ENCODE measurements at regions of chr1 and their contacts with region 1.

Region 1: GRCh38 chr1:235642011-235642942 is 7.3 kb downstream of the GNG4 start:
- DNase-seq: peak; percentile 75
- H3K4me3 Mint-ChIP-seq: peak overlapping the region; percentile 65
- H3K27ac Mint-ChIP-seq: peak overlapping the region; percentile 95
- H3K4me1 Mint-ChIP-seq: peaks cover 73% of the 10 kb centered on the region
- H3K27me3 Mint-ChIP-seq: peaks cover 11% of the 10 kb centered on the region

Region 2: GRCh38 chr1:235495551-235495950 is 146.7 kb before region 1 on chr1:
- intact Hi-C with region 1: loop called (anchors 2 kb)
- DNase-seq: no peak
- H3K4me3 Mint-ChIP-seq: no peak overlapping the region
- H3K27ac Mint-ChIP-seq: no peak overlapping the region
- H3K4me1 Mint-ChIP-seq: peaks cover 22% of the 10 kb centered on the region
- H3K27me3 Mint-ChIP-seq: no peaks in the 10 kb centered on the region

Region 3: DNA sequence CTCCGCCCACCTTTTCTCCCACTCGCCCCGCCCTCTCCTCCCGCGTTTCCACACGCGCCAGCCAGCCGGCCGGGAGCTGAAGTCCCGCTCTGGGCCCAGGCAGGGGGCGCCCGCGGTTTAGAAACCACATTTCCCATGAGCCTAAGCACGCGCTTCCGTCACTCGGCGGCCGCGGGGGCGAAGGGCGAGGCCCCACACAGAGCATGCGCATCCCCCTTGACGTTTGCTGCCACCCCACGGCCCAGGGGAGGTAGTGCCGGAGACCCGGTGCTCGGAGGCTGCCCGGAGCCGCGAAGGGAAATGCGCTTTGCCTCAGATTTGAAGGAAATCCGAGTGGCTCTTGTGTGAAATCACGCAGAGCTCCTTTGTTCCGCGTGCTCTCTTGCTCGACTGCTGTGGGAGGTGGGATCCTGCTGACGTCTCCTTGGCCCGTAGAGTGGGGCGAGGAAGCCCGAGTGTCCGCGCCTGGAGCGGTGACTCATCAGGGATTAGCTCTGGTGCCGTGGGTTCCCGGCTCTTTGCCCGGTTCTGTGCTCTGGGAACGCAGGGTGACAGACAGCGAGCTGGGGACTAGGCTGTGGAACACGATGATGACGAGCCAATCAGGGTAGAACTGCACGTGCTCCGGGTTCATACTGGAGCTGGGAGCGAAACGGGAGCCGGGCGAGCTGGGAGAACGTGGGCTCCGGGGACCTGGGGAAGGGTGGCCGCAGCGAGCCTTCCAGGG is 137.6 kb before region 1 on chr1:
- intact Hi-C with region 1: loop called (anchors 1 kb)
- DNase-seq: peak; percentile 98
- H3K4me3 Mint-ChIP-seq: peak overlapping the region; percentile 94
- H3K27ac Mint-ChIP-seq: peak overlapping the region; percentile 92
- H3K4me1 Mint-ChIP-seq: peaks cover 32% of the 10 kb centered on the region
- H3K27me3 Mint-ChIP-seq: peaks cover 6% of the 10 kb centered on the region

Region 4: GRCh38 chr1:235516862-235517446 is 125.3 kb before region 1 on chr1:
- intact Hi-C with region 1: no loop called
- DNase-seq: no peak
- H3K4me3 Mint-ChIP-seq: no peak overlapping the region
- H3K27ac Mint-ChIP-seq: no peak overlapping the region
- H3K4me1 Mint-ChIP-seq: peaks cover 9% of the 10 kb centered on the region
- H3K27me3 Mint-ChIP-seq: peaks cover 12% of the 10 kb centered on the region

Region 5: GRCh38 chr1:235697508-235697907 is 55.2 kb after region 1 on chr1:
- intact Hi-C with region 1: loop called (anchors 5 kb)
- DNase-seq: no peak
- H3K4me3 Mint-ChIP-seq: no peak overlapping the region
- H3K27ac Mint-ChIP-seq: peak overlapping the region; percentile 80
- H3K4me1 Mint-ChIP-seq: peaks cover 16% of the 10 kb centered on the region
- H3K27me3 Mint-ChIP-seq: no peaks in the 10 kb centered on the region

Region 6: GRCh38 chr1:235806123-235806522 is 163.8 kb after region 1 on chr1:
- intact Hi-C with region 1: no loop called
- DNase-seq: no peak
- H3K4me3 Mint-ChIP-seq: no peak overlapping the region
- H3K27ac Mint-ChIP-seq: no peak overlapping the region
- H3K4me1 Mint-ChIP-seq: peaks cover 4% of the 10 kb centered on the region
- H3K27me3 Mint-ChIP-seq: no peaks in the 10 kb centered on the region

Measured in activated T-helper 2 cell treated with anti-CD3 and anti-CD28 coated beads, Interferon-gamma antibody, Interleukin-2, Interleukin-4, amounts not matched to agents 10 μg/mL and 5 μg/mL and 100 μg/mL, durations not matched to agents 14 hours and 24 hours and 36 hours (primary cell).